B cell (primary cell): ENCODE measurements at regions of chr14 and their contacts with region 1.

Region 1: DNA sequence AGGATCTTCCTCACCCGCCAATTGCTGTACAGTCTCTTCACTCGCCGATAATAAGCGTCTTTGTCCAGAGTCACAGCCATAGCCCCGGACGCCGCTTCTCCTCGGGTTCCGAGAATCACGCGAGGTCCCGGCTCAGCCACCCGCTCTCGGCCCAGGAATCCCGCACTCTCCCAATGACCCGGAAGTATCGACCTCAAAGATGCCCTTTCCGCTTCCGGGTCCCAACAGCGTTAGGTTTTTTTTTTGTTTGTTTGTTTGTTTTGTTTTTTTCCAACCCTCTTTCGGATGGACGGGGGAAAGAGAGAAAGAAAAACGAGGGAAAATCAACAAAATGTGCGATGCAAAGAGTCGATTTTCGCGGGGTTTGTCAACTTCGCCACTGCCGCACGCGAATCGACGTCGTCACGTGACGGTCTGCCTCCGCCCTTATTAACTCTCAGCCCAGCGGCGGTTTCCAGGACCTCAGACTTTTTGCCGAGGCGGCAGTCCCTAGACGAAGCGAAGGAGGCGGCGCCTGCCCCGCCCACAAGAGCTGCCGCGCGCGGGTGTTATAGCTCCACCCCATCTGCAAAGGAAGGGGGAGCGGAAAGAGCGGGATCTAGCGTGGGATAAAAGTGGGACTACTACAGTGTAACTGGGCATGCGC is at the start of gene SUPT16H:
- DNase-seq: peak; percentile 96
- ATAC-seq: peak; percentile 94
- H3K4me3 ChIP-seq: peak within 1 kb of the TSS; percentile 75 to 99 (median 98)
- H3K4me3 Mint-ChIP-seq: peak within 1 kb of the TSS; percentile 96
- H3K27ac ChIP-seq: peak within 1 kb of the TSS; percentile 82 to 94
- H3K27ac Mint-ChIP-seq: peak within 1 kb of the TSS; percentile 100
- H3K4me1 ChIP-seq: peaks cover 20 to 26% of the 10 kb centered on the region in 2 donors
- H3K4me1 Mint-ChIP-seq: peaks cover 43% of the 10 kb centered on the region
- H3K27me3 ChIP-seq: no peaks in the 10 kb centered on the region
- H3K27me3 Mint-ChIP-seq: no peaks in the 10 kb centered on the region
- CTCF ChIP-seq: no peak
- total RNA-seq, gene SUPT16H: 78.3 and 84.4 TPM in 2 replicates

Region 2: GRCh38 chr14:20578784-20579502 is 805.0 kb before region 1 on chr14:
- CTCF ChIA-PET with region 1: no interaction called
- POLR2A ChIA-PET with region 1: no interaction called
- intact Hi-C with region 1: no loop called
- DNase-seq: no peak
- ATAC-seq: no peak
- H3K4me3 ChIP-seq: no peak overlapping the region
- H3K4me3 Mint-ChIP-seq: no peak overlapping the region
- H3K27ac ChIP-seq: no peak overlapping the region
- H3K27ac Mint-ChIP-seq: no peak overlapping the region
- H3K4me1 ChIP-seq: no peaks in the 10 kb centered on the region
- H3K4me1 Mint-ChIP-seq: no peaks in the 10 kb centered on the region
- H3K27me3 ChIP-seq: no peaks in the 10 kb centered on the region
- H3K27me3 Mint-ChIP-seq: peaks cover 10% of the 10 kb centered on the region
- CTCF ChIP-seq: no peak

Region 3: GRCh38 chr14:20970983-20971704 is 412.8 kb before region 1 on chr14:
- CTCF ChIA-PET with region 1: no interaction called
- POLR2A ChIA-PET with region 1: no interaction called
- intact Hi-C with region 1: no loop called
- DNase-seq: peak; percentile 89
- ATAC-seq: peak; percentile 96
- H3K4me3 ChIP-seq: peak overlapping the region; percentile 62 to 76 (median 68)
- H3K4me3 Mint-ChIP-seq: peak overlapping the region; percentile 96
- H3K27ac ChIP-seq: no peak overlapping the region
- H3K27ac Mint-ChIP-seq: peak overlapping the region; percentile 73
- H3K4me1 ChIP-seq: peaks cover 8 to 14% of the 10 kb centered on the region in 2 donors
- H3K4me1 Mint-ChIP-seq: peaks cover 11% of the 10 kb centered on the region
- H3K27me3 ChIP-seq: peaks cover 0 to 43% (median 10%) of the 10 kb centered on the region in 4 experiments
- H3K27me3 Mint-ChIP-seq: peaks cover 63% of the 10 kb centered on the region
- CTCF ChIP-seq: peak; percentile 94

Region 4: DNA sequence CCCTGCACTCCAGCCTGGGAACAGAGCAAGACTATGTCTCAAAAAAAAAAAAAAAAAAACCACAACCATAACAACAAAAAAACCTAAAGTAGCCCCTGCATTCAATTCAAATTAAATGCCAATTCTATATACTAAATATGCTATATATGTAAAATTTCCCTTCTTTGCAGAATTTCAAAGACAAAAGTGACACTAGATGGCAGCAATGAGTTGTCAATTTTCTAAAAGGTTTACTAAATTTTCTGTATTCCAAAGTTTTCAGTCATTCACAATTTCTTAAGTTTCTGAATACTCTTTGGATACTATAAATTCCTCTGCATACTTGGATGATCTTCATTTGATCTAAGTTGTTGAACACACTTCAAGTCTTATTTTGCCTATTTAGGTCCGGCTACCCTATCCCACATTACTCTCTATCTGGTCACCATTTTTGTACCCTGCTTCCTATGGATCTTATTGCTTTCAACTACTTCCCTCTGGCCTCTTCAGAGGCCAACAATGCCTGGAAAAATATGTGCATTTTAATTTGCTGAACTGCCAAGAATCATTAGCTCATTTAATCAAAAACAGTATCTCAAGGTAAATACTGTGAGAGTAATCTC is 142.7 kb before region 1 on chr14:
- CTCF ChIA-PET with region 1: interaction called, 3 read pairs
- POLR2A ChIA-PET with region 1: no interaction called
- intact Hi-C with region 1: loop called (anchors 1 kb)
- DNase-seq: peak; percentile 58
- ATAC-seq: no peak
- H3K4me3 ChIP-seq: no peak overlapping the region
- H3K4me3 Mint-ChIP-seq: no peak overlapping the region
- H3K27ac ChIP-seq: peak overlapping the region in 1 of 2 donors; percentile 10
- H3K27ac Mint-ChIP-seq: peak overlapping the region; percentile 0
- H3K4me1 ChIP-seq: peaks cover 0 to 5% of the 10 kb centered on the region in 2 donors
- H3K4me1 Mint-ChIP-seq: peaks cover 36% of the 10 kb centered on the region
- H3K27me3 ChIP-seq: no peaks in the 10 kb centered on the region
- H3K27me3 Mint-ChIP-seq: no peaks in the 10 kb centered on the region
- CTCF ChIP-seq: peak; percentile 74

Region 5: DNA sequence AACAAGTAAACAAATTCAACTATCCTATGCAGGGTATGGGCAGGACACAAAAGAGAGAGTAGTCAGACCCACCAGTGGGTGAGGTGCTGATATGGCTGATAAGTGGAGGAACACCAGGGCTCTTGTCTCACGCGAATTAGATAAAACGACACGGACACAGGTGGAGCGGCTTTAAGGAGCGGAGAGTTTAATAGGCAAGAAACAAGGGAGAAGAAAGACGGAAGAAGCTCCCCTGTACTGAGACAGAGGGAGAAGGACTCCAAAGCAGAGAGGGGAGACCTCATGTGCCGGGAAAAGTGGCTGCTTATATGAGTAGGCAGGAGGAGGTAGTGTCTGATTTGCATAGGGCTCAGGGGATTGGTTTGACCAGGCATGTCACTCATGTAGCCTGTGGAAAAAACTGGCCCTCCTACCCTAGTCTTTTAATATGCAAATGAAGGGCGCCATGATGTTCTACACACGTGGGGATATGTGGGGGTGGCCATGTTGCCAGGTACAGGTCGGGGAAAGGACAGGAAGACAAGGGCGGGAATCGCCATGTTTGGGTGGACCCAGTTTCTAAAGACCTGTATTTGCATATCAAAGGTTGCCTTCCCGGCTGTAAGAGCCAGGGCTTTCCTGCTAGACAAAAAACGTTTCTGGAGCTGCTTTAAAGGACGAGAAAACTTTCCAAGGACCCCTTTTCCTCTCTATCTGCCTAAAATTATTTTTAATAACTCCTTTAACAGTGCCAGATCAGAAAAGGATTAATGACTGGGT is 75.3 kb before region 1 on chr14:
- CTCF ChIA-PET with region 1: interaction called, 3 read pairs
- POLR2A ChIA-PET with region 1: interaction called, 5 read pairs
- intact Hi-C with region 1: loop called (anchors 1 kb)
- DNase-seq: peak; percentile 88
- ATAC-seq: peak; percentile 86
- H3K4me3 ChIP-seq: peak overlapping the region; percentile 30 to 72 (median 53)
- H3K4me3 Mint-ChIP-seq: peak overlapping the region; percentile 80
- H3K27ac ChIP-seq: peak overlapping the region; percentile 70 to 76
- H3K27ac Mint-ChIP-seq: peak overlapping the region; percentile 84
- H3K4me1 ChIP-seq: peaks cover 20 to 23% of the 10 kb centered on the region in 2 donors
- H3K4me1 Mint-ChIP-seq: peaks cover 26% of the 10 kb centered on the region
- H3K27me3 ChIP-seq: no peaks in the 10 kb centered on the region
- H3K27me3 Mint-ChIP-seq: no peaks in the 10 kb centered on the region
- CTCF ChIP-seq: no peak

Region 6: GRCh38 chr14:21320913-21321312 is 63.1 kb before region 1 on chr14:
- CTCF ChIA-PET with region 1: no interaction called
- POLR2A ChIA-PET with region 1: no interaction called
- intact Hi-C with region 1: no loop called
- DNase-seq: no peak
- ATAC-seq: no peak
- H3K4me3 ChIP-seq: no peak overlapping the region
- H3K4me3 Mint-ChIP-seq: no peak overlapping the region
- H3K27ac ChIP-seq: no peak overlapping the region
- H3K27ac Mint-ChIP-seq: no peak overlapping the region
- H3K4me1 ChIP-seq: peaks cover 16 to 28% of the 10 kb centered on the region in 2 donors
- H3K4me1 Mint-ChIP-seq: peaks cover 21% of the 10 kb centered on the region
- H3K27me3 ChIP-seq: no peaks in the 10 kb centered on the region
- H3K27me3 Mint-ChIP-seq: peaks cover 10% of the 10 kb centered on the region
- CTCF ChIP-seq: no peak

Region 7: GRCh38 chr14:21437063-21437901 is 53.3 kb after region 1 on chr14:
- CTCF ChIA-PET with region 1: no interaction called
- POLR2A ChIA-PET with region 1: interaction called, 7 read pairs
- intact Hi-C with region 1: loop called (anchors 1 kb)
- DNase-seq: peak; percentile 99
- ATAC-seq: peak; percentile 100
- H3K4me3 ChIP-seq: peak overlapping the region; percentile 79 to 96 (median 89)
- H3K4me3 Mint-ChIP-seq: peak overlapping the region; percentile 90
- H3K27ac ChIP-seq: peak overlapping the region; percentile 76 to 93
- H3K27ac Mint-ChIP-seq: peak overlapping the region; percentile 90
- H3K4me1 ChIP-seq: peaks cover 12 to 25% of the 10 kb centered on the region in 2 donors
- H3K4me1 Mint-ChIP-seq: peaks cover 53% of the 10 kb centered on the region
- H3K27me3 ChIP-seq: no peaks in the 10 kb centered on the region
- H3K27me3 Mint-ChIP-seq: no peaks in the 10 kb centered on the region
- CTCF ChIP-seq: no peak

Region 8: DNA sequence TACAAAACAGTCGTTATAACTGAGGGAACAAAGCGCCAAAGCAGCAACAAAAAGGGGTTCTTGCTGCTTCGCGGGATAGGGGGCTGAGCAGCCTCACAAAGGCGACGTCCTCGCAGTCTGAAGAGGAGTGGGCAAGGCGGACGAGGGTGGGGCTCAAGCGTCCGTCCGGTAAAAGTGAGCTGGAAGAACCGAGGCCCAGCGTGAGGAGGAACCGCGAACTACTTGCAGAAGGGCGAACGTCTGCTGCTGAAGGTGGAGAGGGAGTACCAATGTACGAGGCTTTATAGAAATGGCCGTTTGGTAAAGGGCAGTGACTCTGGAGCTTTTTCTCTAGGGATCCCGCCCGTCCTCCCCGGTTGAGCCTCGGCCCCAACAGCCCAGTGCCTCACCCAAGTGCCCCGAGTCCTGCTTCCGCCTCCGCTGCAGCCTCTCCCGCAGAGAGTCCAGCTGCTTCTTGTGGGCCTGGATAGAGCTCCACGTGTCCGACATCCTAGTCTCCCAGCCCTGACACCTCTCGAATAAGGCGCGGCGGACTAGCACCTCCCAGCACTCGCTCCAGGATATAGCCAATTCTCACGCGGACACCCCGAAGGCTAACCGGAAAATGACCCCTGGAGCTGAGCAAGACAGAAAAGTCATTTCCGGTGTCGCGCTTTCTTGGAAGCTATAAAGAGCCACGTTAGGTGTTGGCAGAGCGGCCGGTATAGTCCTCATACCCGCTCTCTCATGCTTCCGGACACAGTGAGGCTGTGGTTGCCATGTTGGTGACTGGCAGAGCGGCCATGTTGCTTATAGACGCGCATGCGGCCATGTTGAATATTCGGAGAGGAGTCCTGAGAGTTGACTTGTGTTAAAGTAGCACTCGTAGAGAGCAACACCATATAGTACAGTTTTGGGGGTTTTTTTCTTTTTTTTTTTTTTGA is 127.0 kb after region 1 on chr14 and contains the start of gene METTL3:
- CTCF ChIA-PET with region 1: no interaction called
- POLR2A ChIA-PET with region 1: interaction called, 3 read pairs
- intact Hi-C with region 1: loop called (anchors 1 kb)
- DNase-seq: peak; percentile 95
- ATAC-seq: peak; percentile 99
- H3K4me3 ChIP-seq: peak within 1 kb of the TSS; percentile 76 to 99 (median 96)
- H3K4me3 Mint-ChIP-seq: peak within 1 kb of the TSS; percentile 100
- H3K27ac ChIP-seq: peak within 1 kb of the TSS; percentile 81 to 90
- H3K27ac Mint-ChIP-seq: peak within 1 kb of the TSS; percentile 97
- H3K4me1 ChIP-seq: peaks cover 14 to 22% of the 10 kb centered on the region in 2 donors
- H3K4me1 Mint-ChIP-seq: peaks cover 40% of the 10 kb centered on the region
- H3K27me3 ChIP-seq: no peaks in the 10 kb centered on the region
- H3K27me3 Mint-ChIP-seq: peaks cover 4% of the 10 kb centered on the region
- CTCF ChIP-seq: no peak
- total RNA-seq, gene METTL3: 118 and 124 TPM in 2 replicates